ENCODE measurements at regions of chr13 and their contacts with region 1.

Region 1: GRCh38 chr13:98142380-98143156 is at the start of gene FARP1:
- DNase-seq: peak; percentile 62
- H3K4me3 Mint-ChIP-seq: peak within 1 kb of the TSS; percentile 73
- H3K27ac Mint-ChIP-seq: no peak within 1 kb of the TSS
- H3K4me1 Mint-ChIP-seq: peaks cover 9% of the 10 kb centered on the region
- H3K27me3 Mint-ChIP-seq: peaks cover 52% of the 10 kb centered on the region
- total RNA-seq, gene FARP1: 0.27 to 0.38 TPM

Region 2: DNA sequence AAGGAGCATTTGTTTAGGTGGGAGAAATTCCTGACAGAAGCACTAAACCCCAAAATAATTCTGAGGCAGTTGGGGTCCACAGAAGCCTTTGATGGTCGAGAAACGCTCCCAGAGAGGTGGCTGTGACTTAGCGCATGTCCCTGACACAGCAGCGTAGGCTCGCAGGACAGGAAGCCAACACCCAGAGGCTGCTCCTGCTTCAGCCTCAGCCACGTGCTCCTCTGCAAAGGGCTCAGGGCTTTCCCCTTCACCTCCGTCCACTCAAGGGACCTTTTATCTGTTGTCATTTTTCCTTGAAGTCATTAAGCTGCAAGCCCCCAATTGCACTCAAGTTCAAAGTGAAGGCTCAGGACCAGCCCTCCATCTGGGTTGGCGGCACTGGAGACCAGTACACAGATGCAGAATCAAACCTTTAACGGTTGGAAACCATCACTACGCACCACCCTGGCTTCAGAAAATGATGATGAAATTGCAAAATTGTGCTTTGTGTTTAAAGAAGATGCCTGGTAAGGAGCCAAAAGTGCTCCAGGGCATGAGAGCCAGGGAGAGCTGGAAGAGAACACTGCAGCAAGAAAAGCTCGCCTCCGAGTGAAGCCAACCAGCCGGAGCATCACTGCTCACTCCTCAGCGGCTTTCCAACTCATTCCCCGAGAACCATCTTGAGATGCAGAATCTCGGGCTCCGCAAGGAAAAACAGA is 489.0 kb before region 1 on chr13:
- CTCF ChIA-PET with region 1: no interaction called
- intact Hi-C with region 1: no loop called
- DNase-seq: no peak
- H3K4me3 Mint-ChIP-seq: no peak overlapping the region
- H3K27ac Mint-ChIP-seq: no peak overlapping the region
- H3K4me1 Mint-ChIP-seq: no peaks in the 10 kb centered on the region
- H3K27me3 Mint-ChIP-seq: peaks cover 2% of the 10 kb centered on the region

Region 3: DNA sequence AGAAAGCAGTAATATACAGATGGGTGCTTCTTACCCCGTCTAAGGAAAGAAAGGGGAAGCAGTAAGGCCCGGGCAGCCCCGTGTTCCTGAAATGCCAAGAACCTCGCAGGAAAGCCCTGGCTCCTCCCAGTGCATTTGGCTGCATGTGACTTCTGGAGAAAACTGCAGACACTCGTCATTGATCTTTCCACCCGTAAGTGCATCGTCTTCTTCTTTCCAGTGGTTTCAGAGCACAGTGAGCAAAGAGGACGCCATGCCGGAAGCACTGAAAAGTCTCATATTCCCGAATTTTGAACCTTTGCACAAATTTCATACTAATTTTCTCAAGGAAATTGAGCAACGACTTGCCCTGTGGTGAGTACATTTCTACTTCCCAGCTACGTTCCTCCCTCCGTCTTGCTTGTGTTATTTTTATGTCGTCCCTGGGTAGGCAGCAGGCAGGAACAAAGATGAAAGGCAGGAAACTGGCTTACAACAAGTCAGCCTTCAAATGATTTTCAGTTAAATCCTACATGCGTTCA is 269.2 kb after region 1 on chr13:
- CTCF ChIA-PET with region 1: no interaction called
- intact Hi-C with region 1: loop called (anchors 2 kb)
- DNase-seq: no peak
- H3K4me3 Mint-ChIP-seq: peak overlapping the region; percentile 50
- H3K27ac Mint-ChIP-seq: no peak overlapping the region
- H3K4me1 Mint-ChIP-seq: peaks cover 17% of the 10 kb centered on the region
- H3K27me3 Mint-ChIP-seq: no peaks in the 10 kb centered on the region

Measured in activated naive CD4-positive, alpha-beta T cell treated with anti-CD3 and anti-CD28 coated beads for 36 hours (primary cell).